Transverse colon (tissue), 4 donors: ENCODE measurements at regions of chr10 and their contacts with region 1.

Region 1: GRCh38 chr10:35642027-35642792 is at the start of gene FZD8:
- DNase-seq: peak; percentile 93
- H3K4me3 ChIP-seq: peak within 1 kb of the TSS; percentile 53 to 94 (median 82)
- H3K27ac ChIP-seq: peak within 1 kb of the TSS; percentile 92 to 96 (median 94)
- H3K4me1 ChIP-seq: peaks cover 0 to 28% (median 26%) of the 10 kb centered on the region in 4 donors
- H3K27me3 ChIP-seq: peaks cover 11% of the 10 kb centered on the region
- CTCF ChIP-seq: peak in 2 of 5 experiments; percentile 21 to 22
- EP300 ChIP-seq: no peak
- POLR2A ChIP-seq: peak; percentile 93
- total RNA-seq, gene FZD8: 8.6 to 14.9 (median 10.6) TPM

Region 2: DNA sequence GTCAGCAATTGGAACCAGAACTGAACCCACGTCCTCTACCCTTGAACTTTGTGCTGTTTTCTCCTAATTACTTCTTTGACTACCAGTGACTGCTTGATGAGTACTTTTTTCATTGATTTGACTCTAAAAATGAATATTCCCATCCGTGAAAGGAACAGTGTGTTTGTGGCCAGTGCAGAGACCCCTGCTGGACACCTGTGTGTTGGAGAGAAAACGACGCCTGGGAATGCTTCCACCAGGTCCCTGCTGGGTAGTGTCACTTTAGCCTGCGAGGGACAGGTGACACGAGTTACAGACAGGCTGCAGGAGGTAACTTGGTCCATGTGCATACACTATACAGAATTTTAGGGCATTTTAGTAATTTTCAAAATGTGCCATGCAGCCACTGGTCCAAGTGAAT is 43.8 kb before region 1 on chr10:
- in situ Hi-C with region 1: no loop called
- intact Hi-C with region 1: no loop called
- DNase-seq: no peak
- H3K4me3 ChIP-seq: no peak overlapping the region
- H3K27ac ChIP-seq: no peak overlapping the region
- H3K4me1 ChIP-seq: no peaks in the 10 kb centered on the region
- H3K27me3 ChIP-seq: no peaks in the 10 kb centered on the region
- CTCF ChIP-seq: peak in 3 of 5 experiments; percentile 8 to 15 (median 11)
- EP300 ChIP-seq: no peak
- POLR2A ChIP-seq: no peak

Region 3: GRCh38 chr10:35916791-35917190 is 274.6 kb after region 1 on chr10:
- in situ Hi-C with region 1: loop called in 2 of 4 experiments (anchors 25 kb)
- intact Hi-C with region 1: no loop called
- DNase-seq: no peak
- H3K4me3 ChIP-seq: no peak overlapping the region
- H3K27ac ChIP-seq: no peak overlapping the region
- H3K4me1 ChIP-seq: peaks cover 0 to 8% (median 0%) of the 10 kb centered on the region in 4 donors
- H3K27me3 ChIP-seq: no peaks in the 10 kb centered on the region
- CTCF ChIP-seq: peak in 2 of 5 experiments; percentile 29 to 42
- EP300 ChIP-seq: no peak
- POLR2A ChIP-seq: no peak

Region 4: GRCh38 chr10:36171953-36172940 is 530.0 kb after region 1 on chr10:
- in situ Hi-C with region 1: loop called in 1 of 4 experiments (anchors 25 kb)
- intact Hi-C with region 1: no loop called
- DNase-seq: no peak
- H3K4me3 ChIP-seq: no peak overlapping the region
- H3K27ac ChIP-seq: peak overlapping the region in 3 of 4 donors; percentile 9 to 31 (median 9)
- H3K4me1 ChIP-seq: peaks cover 0 to 12% (median 6%) of the 10 kb centered on the region in 4 donors
- H3K27me3 ChIP-seq: no peaks in the 10 kb centered on the region
- CTCF ChIP-seq: no peak
- EP300 ChIP-seq: no peak
- POLR2A ChIP-seq: no peak

Region 5: DNA sequence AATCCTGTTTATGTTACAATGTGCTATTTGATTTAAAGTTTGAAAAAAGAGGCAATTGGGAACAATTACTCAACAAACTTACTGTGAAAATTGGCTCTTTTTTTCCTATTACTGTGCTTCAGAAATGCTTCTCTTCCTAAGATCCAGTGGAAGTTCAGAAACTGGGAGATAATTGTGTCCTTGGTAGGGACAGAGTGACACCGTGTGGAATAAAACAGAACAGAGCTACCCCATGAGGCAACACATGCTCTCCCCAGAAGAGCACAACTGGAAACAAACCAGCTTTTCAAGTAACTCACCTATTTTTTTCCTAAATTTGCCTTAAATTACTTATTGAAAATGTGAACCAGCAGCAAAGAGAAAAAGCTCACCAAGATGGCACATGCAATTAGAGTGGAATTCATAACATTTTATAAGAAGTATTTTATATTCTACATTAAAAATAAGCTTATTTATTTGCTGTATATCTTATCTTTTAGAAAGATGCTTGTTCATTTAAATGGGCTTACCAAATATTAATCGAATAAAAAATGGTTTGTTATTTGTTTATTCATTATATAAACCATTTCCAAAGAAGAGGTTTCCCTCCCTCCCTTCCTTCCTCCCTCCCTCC is 1137.1 kb after region 1 on chr10:
- in situ Hi-C with region 1: loop called (anchors 5 to 25 kb)
- intact Hi-C with region 1: loop called (anchors 5 kb)
- DNase-seq: peak; percentile 11
- H3K4me3 ChIP-seq: no peak overlapping the region
- H3K27ac ChIP-seq: no peak overlapping the region
- H3K4me1 ChIP-seq: no peaks in the 10 kb centered on the region
- H3K27me3 ChIP-seq: no peaks in the 10 kb centered on the region
- CTCF ChIP-seq: peak; percentile 46 to 62 (median 59)
- EP300 ChIP-seq: no peak
- POLR2A ChIP-seq: no peak